Activated T-helper 2 cell treated with anti-CD3 and anti-CD28 coated beads, Interferon-gamma antibody, Interleukin-2, Interleukin-4, amounts not matched to agents 10 μg/mL and 5 μg/mL and 100 μg/mL, durations not matched to agents 14 hours and 24 hours and 36 hours (primary cell): ENCODE measurements at regions of chr10 and their contacts with region 1.

Region 1: GRCh38 chr10:117653170-117653515 is 110.6 kb downstream of the EMX2 start:
- DNase-seq: peak; percentile 52
- H3K4me3 Mint-ChIP-seq: no peak overlapping the region
- H3K27ac Mint-ChIP-seq: peak overlapping the region; percentile 68
- H3K4me1 Mint-ChIP-seq: peaks cover 35% of the 10 kb centered on the region
- H3K27me3 Mint-ChIP-seq: peaks cover 2% of the 10 kb centered on the region

Region 2: DNA sequence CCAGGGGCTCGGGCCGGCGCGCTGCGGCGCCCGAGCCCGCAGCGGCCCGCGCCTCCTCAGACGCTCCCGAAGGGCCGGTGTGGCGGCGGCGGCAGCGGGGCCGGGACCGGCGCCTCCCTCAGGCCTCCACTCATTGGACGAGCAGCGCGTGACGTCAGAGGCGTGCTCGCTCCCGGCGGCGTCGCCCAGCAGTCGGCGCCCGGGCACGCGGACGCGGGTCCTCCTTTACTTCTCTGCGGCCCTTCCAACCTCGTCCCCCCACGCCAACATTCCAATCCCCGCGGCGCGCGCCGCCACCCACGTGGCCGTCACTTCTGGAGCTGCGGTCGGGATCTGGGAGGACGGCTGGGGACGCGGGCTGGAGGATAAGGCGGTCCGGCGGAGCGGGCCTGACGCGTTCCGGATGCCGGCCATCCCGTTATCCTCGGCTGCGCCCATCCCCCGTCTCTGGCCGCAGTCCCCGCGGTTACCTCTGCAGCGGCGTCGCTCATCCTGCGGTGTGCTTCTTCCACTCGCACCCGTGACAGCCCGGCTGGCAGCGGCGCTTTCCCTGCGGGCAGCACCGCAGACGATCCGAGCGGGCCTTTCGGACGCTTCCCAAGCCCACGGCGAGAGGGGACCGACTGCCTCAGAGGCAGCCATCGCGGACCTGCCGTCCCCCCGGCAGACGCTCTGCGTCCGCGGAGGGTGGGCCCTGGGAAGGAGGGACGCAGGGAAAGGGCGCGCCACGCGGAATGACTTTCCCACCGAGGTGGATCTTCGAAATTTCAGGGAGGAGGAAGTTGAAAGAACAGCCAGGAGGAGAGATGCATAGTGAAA is 277.6 kb before region 1 on chr10 and contains the start of gene PDZD8:
- intact Hi-C with region 1: loop called (anchors 10 kb)
- DNase-seq: peak; percentile 84
- H3K4me3 Mint-ChIP-seq: peak within 1 kb of the TSS; percentile 90
- H3K27ac Mint-ChIP-seq: peak within 1 kb of the TSS; percentile 76
- H3K4me1 Mint-ChIP-seq: peaks cover 21% of the 10 kb centered on the region
- H3K27me3 Mint-ChIP-seq: peaks cover 38% of the 10 kb centered on the region
- total RNA-seq, gene PDZD8: 20.6 and 22.0 TPM in 2 replicates

Region 3: GRCh38 chr10:117581961-117582360 is 71.2 kb before region 1 on chr10:
- intact Hi-C with region 1: no loop called
- DNase-seq: no peak
- H3K4me3 Mint-ChIP-seq: no peak overlapping the region
- H3K27ac Mint-ChIP-seq: no peak overlapping the region
- H3K4me1 Mint-ChIP-seq: no peaks in the 10 kb centered on the region
- H3K27me3 Mint-ChIP-seq: no peaks in the 10 kb centered on the region

Region 4: DNA sequence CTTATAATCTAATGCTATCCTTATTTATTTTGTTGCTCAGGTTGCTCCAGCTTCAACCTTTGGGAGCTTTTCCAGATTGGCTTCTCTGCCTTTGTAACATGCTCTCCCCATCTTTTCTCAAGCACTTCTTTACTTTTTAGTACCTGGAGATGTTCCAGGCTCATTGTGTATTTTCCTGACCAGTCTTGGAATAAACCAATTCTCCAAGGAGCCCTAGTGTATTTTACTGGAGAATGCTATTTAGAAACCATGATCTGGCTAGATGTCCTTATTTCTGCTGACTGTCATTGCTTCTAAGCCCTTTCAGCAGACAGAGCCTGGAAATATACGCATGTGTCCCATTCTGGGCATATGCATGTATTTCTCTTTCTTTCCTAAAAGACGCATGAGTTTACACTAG is 14.9 kb before region 1 on chr10:
- intact Hi-C with region 1: loop called (anchors 2 kb)
- DNase-seq: no peak
- H3K4me3 Mint-ChIP-seq: no peak overlapping the region
- H3K27ac Mint-ChIP-seq: no peak overlapping the region
- H3K4me1 Mint-ChIP-seq: no peaks in the 10 kb centered on the region
- H3K27me3 Mint-ChIP-seq: peaks cover 39% of the 10 kb centered on the region

Region 5: DNA sequence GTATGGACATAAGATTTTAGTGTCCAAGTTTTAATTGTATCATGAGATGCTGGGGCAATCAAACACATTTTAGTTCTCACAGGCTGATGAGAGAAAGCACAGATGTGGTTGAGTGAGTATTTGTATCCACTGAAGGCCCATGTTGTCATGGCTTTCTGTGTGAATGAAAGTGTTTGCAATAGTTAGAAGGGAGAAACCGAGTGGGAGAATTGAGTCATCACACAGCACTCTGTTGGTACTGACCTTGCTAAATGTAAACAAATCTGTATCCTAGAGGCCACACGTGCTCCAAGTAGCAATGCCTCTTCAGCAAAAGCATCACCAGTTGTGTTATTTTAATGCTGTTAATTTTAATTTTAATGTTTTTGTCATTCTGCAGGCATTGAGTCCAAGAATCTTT is 10.6 kb after region 1 on chr10:
- intact Hi-C with region 1: loop called (anchors 1 kb)
- DNase-seq: peak; percentile 10
- H3K4me3 Mint-ChIP-seq: no peak overlapping the region
- H3K27ac Mint-ChIP-seq: peak overlapping the region; percentile 80
- H3K4me1 Mint-ChIP-seq: peaks cover 5% of the 10 kb centered on the region
- H3K27me3 Mint-ChIP-seq: peaks cover 7% of the 10 kb centered on the region

Region 6: DNA sequence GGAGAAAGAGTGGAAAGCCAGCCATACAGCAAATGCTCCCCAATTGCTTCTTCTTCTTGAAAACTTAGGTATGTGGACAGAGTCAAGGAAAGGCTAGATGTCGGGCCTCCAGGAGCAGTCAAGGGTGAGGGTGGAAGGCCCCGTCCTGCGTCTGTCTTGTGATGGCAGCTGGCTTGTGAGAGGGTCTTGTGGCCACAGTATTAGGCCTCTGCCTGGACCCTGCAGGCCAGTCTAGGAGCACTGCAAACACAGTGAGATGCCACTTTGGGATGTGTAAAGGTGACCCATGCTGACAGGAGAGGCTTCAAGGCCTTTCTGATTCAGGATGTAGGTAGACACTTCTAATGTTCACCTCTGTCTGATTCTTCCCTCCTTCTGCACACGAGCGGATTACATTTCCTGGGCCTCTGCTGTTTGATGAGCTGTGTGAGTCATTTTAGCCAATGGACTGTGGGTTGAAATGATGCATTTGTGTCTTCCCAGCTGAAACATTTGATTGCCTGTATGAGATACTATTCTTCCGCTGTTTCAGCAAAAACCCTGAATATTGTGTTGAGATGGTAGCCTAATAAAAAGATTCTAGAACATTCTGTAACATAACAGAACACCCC is 24.9 kb after region 1 on chr10:
- intact Hi-C with region 1: no loop called
- DNase-seq: no peak
- H3K4me3 Mint-ChIP-seq: no peak overlapping the region
- H3K27ac Mint-ChIP-seq: no peak overlapping the region
- H3K4me1 Mint-ChIP-seq: peaks cover 7% of the 10 kb centered on the region
- H3K27me3 Mint-ChIP-seq: peaks cover 12% of the 10 kb centered on the region

Region 7: GRCh38 chr10:117694190-117694589 is 41.0 kb after region 1 on chr10:
- intact Hi-C with region 1: loop called (anchors 2 kb)
- DNase-seq: no peak
- H3K4me3 Mint-ChIP-seq: no peak overlapping the region
- H3K27ac Mint-ChIP-seq: no peak overlapping the region
- H3K4me1 Mint-ChIP-seq: peaks cover 3% of the 10 kb centered on the region
- H3K27me3 Mint-ChIP-seq: peaks cover 8% of the 10 kb centered on the region

Region 8: DNA sequence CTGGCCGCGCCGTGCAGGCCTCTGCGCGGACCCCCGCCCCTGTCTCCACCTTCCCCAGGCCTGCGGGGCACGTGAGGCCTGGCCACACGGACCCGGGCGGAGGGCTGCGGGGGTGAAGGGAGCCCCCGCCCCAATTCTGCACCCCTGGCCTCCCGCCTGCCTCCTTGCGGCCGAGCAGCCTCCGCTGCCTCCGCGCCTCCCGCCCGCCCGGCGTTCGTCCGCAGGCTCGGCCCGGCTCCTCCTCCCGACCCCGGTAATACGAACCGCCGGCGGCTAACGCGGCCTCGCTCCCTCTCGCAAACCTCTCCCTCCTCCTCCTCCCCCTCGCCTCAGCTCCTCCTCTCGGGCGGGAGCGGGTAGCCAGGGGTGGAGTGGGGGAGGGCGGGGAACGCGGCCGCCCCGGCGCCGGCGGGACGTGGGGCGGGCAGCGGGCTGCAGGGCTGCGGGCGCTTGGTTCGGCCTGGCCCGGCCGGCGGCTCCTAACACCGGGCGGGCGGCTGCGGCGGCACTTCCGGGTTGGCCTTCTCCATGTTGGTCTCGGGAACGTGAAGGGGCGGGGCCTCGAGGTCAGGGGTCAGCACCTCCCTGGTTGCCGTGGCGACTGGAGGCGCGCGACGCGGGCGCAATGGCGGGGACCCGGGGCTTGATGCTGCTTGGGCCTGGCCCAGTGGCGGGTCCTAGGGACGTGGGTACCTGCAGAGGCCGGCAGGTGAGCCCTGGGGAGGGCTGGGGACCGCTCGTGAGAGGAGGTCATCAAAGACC is 393.4 kb after region 1 on chr10 and contains the start of gene RAB11FIP2:
- intact Hi-C with region 1: loop called (anchors 10 kb)
- DNase-seq: peak; percentile 92
- H3K4me3 Mint-ChIP-seq: peak within 1 kb of the TSS; percentile 91
- H3K27ac Mint-ChIP-seq: peak within 1 kb of the TSS; percentile 76
- H3K4me1 Mint-ChIP-seq: peaks cover 23% of the 10 kb centered on the region
- H3K27me3 Mint-ChIP-seq: peaks cover 11% of the 10 kb centered on the region
- total RNA-seq, gene RAB11FIP2: 11.2 and 13.8 TPM in 2 replicates

Region 9: GRCh38 chr10:118341791-118342637 is 688.9 kb after region 1 on chr10 and contains the start of gene FAM204A:
- intact Hi-C with region 1: loop called (anchors 10 kb)
- DNase-seq: peak; percentile 95
- H3K4me3 Mint-ChIP-seq: peak within 1 kb of the TSS; percentile 94
- H3K27ac Mint-ChIP-seq: peak within 1 kb of the TSS; percentile 82
- H3K4me1 Mint-ChIP-seq: peaks cover 20% of the 10 kb centered on the region
- H3K27me3 Mint-ChIP-seq: peaks cover 3% of the 10 kb centered on the region
- total RNA-seq, gene FAM204A: 53.1 and 55.6 TPM in 2 replicates